Head of caudate nucleus (tissue), 42 donors: ENCODE measurements at regions of chr22 and their contacts with region 1.

Region 1: DNA sequence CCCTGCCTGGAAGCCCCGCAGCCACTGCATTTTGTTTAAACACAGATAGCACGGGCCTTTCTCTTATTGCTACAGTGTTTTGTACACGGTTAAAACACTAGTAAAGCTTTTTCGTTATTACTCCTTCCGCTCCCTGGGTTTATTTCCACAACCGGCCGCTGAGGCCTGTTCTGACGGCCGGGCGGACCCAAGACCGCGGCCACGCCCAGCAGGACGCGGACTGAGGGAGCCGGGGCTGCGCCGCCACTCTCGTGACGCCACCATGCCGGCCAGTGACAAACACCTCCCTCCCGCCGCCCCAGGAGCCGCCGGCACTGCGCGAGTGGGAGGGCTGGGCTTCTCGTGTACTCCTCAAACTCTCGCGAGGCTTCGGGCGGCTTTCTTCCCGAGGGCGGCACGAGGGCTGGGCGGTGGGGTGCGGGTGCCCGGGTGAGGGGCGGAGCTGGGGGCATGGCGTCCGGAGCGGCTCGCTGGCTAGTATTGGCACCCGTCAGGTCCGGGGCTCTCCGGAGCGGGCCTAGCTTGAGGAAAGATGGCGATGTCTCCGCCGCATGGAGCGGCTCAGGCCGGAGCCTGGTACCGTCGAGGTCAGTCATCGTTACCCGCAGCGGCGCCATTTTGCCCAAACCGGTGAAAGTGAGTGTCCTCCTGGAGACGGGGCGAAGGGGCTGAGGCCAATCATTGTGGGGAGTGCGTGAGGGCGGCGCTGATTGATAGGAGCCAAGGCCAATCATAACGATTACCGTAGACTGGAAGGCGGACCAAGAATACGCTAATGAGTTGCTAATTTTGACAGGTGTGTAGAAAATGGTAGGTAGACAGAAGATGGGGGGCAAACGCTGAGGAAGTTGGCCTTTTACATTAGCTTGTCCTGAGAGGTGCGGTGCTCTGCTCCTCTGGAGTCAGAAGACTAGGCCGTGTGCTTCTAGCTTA is at the start of gene SMDT1:
- DNase-seq: peak; percentile 97 to 100 (median 99)

Region 2: GRCh38 chr22:41966607-41967240 is 112.9 kb before region 1 on chr22:
- intact Hi-C with region 1: loop called (anchors 10 kb)
- DNase-seq: peak in 29 of 42 donors; percentile 17 to 83 (median 60)